Aorta (tissue), 5 donors: ENCODE measurements at regions of chrX and their contacts with region 1.

Region 1: DNA sequence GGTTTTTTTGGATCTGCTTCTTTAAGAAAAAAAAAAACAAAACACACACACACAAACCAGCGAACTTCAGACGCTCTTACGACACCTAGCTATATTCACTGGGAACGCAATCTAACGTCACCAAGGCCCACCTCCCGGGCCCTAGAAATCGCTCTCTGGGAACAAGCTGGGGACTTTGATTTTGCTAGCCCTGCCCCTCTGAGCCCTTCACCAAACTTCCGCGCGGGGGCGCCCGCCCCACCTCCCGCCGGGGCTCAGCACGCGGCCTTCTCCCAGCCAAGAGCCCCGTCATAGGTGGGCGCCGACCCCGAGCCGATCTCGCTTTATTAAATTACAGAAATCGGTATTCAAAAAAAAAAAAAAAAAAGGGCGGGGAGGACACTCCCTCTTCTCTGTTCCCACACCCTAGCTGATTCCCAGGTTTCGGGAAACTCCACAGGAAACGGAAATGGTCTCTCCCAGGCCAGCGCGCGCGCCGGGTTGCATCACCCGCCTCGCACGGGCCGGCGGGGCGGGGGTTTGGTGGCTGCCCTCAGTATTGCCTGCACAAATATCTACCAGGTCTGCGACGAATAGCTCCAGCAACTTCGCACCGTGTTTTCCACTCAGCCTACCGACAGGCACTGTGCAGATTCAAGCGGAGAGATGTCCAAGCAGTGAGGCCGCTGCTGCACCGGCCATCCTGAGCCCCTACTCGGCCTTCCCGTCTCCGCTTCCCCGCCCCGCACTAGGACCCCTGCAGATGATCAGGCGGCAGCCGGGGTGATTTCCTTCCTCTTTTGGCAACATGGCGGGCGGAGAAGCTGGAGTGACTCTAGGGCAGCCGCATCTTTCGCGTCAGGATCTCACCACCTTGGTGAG is at the start of gene EIF2S3:
- DNase-seq: peak; percentile 94 to 95
- ATAC-seq: peak; percentile 99
- H3K4me3 ChIP-seq: peak within 1 kb of the TSS; percentile 28 to 61
- H3K27ac ChIP-seq: peak within 1 kb of the TSS in 1 of 2 donors; percentile 78
- H3K4me1 ChIP-seq: no peaks in the 10 kb centered on the region
- H3K27me3 ChIP-seq: no peaks in the 10 kb centered on the region
- total RNA-seq, gene EIF2S3: 138 to 173 TPM

Region 2: GRCh38 chrX:23694606-23695005 is 359.8 kb before region 1 on chrX:
- intact Hi-C with region 1: loop called in 1 of 2 experiments (anchors 10 kb)
- DNase-seq: peak in 1 of 2 donors; percentile 64
- ATAC-seq: no peak
- H3K4me3 ChIP-seq: no peak overlapping the region
- H3K27ac ChIP-seq: no peak overlapping the region
- H3K4me1 ChIP-seq: no peaks in the 10 kb centered on the region
- H3K27me3 ChIP-seq: no peaks in the 10 kb centered on the region

Region 3: GRCh38 chrX:24024819-24025740 is 29.3 kb before region 1 on chrX:
- intact Hi-C with region 1: loop called in 1 of 2 experiments (anchors 1 kb)
- DNase-seq: peak; percentile 92 to 95
- ATAC-seq: peak; percentile 94
- H3K4me3 ChIP-seq: peak overlapping the region; percentile 29 to 35
- H3K27ac ChIP-seq: peak overlapping the region in 1 of 2 donors; percentile 64
- H3K4me1 ChIP-seq: no peaks in the 10 kb centered on the region
- H3K27me3 ChIP-seq: peaks cover 0 to 2% of the 10 kb centered on the region in 2 donors

Region 4: DNA sequence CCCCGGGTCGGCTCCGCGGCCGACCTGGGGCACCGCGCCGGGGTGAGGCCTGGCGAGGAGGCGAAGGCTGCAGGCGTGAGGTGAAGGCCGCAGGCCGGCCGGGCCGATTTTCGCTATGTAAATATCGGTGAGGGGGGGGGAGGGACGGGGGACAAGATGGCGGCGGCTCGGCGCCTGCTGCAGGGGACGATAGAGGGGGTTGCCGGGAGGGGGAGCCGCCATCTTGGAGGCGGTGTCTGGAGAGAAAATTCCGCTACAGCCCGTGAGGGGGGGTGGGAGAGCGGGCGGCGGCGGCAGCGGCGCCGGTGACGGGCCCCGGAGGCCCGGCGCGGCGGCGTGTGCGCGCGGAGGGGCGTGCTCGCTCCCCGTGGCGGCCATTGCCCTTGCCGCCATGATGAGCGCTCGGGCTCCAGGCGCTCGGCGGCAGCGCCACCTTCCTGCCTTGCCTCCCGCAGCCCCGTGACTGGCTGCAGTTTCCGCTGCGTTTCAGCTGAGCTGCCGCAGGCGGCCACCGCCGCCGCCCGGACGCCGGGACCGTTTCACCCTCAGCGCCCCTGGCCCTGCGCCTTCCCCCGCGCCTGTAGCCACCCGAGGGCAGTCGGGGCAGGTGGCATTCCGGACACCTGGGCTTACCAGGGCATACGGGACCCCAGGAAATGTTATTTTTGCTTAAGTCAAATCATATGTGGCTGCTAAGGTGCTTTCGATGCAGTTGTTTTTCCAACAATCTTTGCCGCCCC is 95.8 kb after region 1 on chrX:
- intact Hi-C with region 1: loop called (anchors 2 kb)
- DNase-seq: peak; percentile 95 to 97
- ATAC-seq: peak; percentile 93
- H3K4me3 ChIP-seq: peak overlapping the region; percentile 84 to 97
- H3K27ac ChIP-seq: peak overlapping the region; percentile 99 to 100
- H3K4me1 ChIP-seq: peaks cover 0 to 3% of the 10 kb centered on the region in 2 donors
- H3K27me3 ChIP-seq: no peaks in the 10 kb centered on the region